B cell (primary cell): ENCODE measurements at regions of chr2 and their contacts with region 1.

Region 1: DNA sequence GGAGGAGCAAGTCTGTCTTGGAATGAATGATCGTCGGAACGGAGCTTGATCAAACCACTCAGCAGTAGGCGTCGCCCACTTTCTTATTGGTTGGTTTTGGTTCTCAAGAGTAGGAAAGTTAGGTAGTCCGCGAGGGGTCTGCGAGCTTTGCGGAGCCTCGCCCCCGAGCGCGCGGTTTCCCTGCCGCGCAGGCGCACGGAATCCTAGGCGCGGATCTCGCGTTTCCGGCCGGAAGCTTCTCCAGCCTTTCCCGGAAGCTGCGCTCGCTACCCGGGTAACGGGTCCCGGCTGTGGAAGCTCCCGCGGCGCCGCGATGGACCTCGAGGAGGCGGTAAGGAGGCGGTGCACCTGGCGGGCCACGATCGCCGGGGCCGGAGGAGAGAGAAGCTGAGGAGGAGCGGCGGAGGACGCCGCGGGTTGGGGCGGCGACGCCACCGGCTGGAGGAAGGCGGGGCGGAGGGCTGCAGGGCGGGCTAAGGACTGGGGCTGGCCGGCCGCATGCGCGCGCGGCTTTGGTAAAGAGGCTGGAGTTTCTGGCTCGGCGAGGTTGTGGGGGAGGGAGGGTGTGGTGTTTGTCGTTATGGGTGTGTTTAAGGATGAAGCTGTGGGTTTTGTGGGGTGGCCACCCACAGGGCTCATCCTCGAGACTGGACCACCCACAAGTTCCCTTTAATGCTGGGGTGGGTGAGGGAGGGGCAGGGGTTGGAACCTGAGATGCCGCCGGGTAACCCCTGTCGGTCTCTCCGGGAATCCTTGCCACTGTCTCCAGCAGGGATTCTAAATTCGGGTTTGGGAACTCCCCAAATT is at the start of gene TAF1B:
- DNase-seq: peak; percentile 90
- ATAC-seq: peak; percentile 86
- H3K4me3 ChIP-seq: peak within 1 kb of the TSS; percentile 73 to 90 (median 84)
- H3K4me3 Mint-ChIP-seq: peak within 1 kb of the TSS; percentile 97
- H3K27ac ChIP-seq: peak within 1 kb of the TSS; percentile 51 to 72
- H3K27ac Mint-ChIP-seq: peak within 1 kb of the TSS; percentile 96
- H3K4me1 ChIP-seq: peaks cover 14 to 20% of the 10 kb centered on the region in 2 donors
- H3K4me1 Mint-ChIP-seq: peaks cover 31% of the 10 kb centered on the region
- H3K27me3 ChIP-seq: no peaks in the 10 kb centered on the region
- H3K27me3 Mint-ChIP-seq: no peaks in the 10 kb centered on the region
- CTCF ChIP-seq: peak; percentile 21
- total RNA-seq, gene TAF1B: 21.8 and 25.5 TPM in 2 replicates

Region 2: GRCh38 chr2:9555297-9556141 is 287.9 kb before region 1 on chr2 and contains the start of gene ADAM17:
- CTCF ChIA-PET with region 1: no interaction called
- POLR2A ChIA-PET with region 1: interaction called, 3 read pairs
- intact Hi-C with region 1: loop called (anchors 5 kb)
- DNase-seq: peak; percentile 94
- ATAC-seq: peak; percentile 91
- H3K4me3 ChIP-seq: peak within 1 kb of the TSS; percentile 74 to 99 (median 98)
- H3K4me3 Mint-ChIP-seq: peak within 1 kb of the TSS; percentile 98
- H3K27ac ChIP-seq: peak within 1 kb of the TSS; percentile 92 to 93
- H3K27ac Mint-ChIP-seq: peak within 1 kb of the TSS; percentile 99
- H3K4me1 ChIP-seq: peaks cover 41 to 44% of the 10 kb centered on the region in 2 donors
- H3K4me1 Mint-ChIP-seq: peaks cover 47% of the 10 kb centered on the region
- H3K27me3 ChIP-seq: no peaks in the 10 kb centered on the region
- H3K27me3 Mint-ChIP-seq: no peaks in the 10 kb centered on the region
- CTCF ChIP-seq: peak; percentile 33
- total RNA-seq, gene ADAM17: 57.8 and 60.5 TPM in 2 replicates

Region 3: DNA sequence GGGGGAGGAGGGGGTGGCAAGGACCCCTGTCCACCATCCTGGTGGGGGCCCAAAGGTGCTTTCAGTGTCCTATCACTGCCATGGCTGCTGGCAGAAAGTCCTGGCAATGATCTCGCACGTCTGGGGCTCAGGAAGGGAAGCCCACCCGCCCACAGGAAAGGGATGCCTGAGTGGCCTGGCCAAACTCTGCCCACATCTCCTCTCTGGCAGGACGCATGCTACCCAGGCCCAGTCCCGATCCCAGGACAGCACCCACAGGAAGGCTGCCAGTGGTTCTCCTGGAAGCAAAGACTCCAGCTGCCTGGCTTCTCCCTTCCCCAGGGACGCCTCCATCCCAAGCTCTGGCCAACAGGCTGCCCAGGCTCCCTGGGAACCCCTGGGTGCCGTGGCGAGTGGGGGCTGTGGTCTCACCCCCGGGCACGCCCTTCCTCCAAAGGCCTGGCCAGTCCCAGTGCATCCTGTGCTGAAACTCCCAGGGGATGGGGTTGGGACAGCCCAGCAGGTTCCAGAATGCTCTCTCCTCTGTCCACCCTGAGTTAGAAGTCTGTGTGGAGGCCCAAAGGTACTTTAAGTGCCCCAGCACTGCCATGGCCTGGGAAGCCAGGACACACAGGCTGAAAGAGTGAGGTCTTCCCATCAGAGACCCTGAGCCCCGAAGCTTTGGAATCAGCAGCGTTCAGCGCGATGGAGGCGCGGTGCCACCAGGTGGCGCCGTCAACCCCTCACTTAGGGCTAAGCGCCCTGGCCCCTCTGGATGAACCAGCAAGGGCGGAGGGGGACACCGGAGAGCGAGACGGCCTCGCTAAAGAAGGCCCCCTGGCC is 29.9 kb before region 1 on chr2:
- CTCF ChIA-PET with region 1: interaction called, 25 read pairs
- POLR2A ChIA-PET with region 1: no interaction called
- intact Hi-C with region 1: loop called (anchors 1 kb)
- DNase-seq: peak; percentile 77
- ATAC-seq: peak; percentile 65
- H3K4me3 ChIP-seq: no peak overlapping the region
- H3K4me3 Mint-ChIP-seq: no peak overlapping the region
- H3K27ac ChIP-seq: no peak overlapping the region
- H3K27ac Mint-ChIP-seq: no peak overlapping the region
- H3K4me1 ChIP-seq: peaks cover 6 to 10% of the 10 kb centered on the region in 2 donors
- H3K4me1 Mint-ChIP-seq: peaks cover 7% of the 10 kb centered on the region
- H3K27me3 ChIP-seq: peaks cover 0 to 10% (median 5%) of the 10 kb centered on the region in 4 experiments
- H3K27me3 Mint-ChIP-seq: peaks cover 13% of the 10 kb centered on the region
- CTCF ChIP-seq: peak; percentile 96

Region 4: GRCh38 chr2:9967053-9967775 is 123.8 kb after region 1 on chr2:
- CTCF ChIA-PET with region 1: no interaction called
- POLR2A ChIA-PET with region 1: no interaction called
- intact Hi-C with region 1: loop called (anchors 5 kb)
- DNase-seq: peak; percentile 74
- ATAC-seq: peak; percentile 96
- H3K4me3 ChIP-seq: no peak overlapping the region
- H3K4me3 Mint-ChIP-seq: no peak overlapping the region
- H3K27ac ChIP-seq: no peak overlapping the region
- H3K27ac Mint-ChIP-seq: peak overlapping the region; percentile 39
- H3K4me1 ChIP-seq: peaks cover 8 to 11% of the 10 kb centered on the region in 2 donors
- H3K4me1 Mint-ChIP-seq: peaks cover 17% of the 10 kb centered on the region
- H3K27me3 ChIP-seq: peaks cover 0 to under 1% (median 0%) of the 10 kb centered on the region in 4 experiments
- H3K27me3 Mint-ChIP-seq: no peaks in the 10 kb centered on the region
- CTCF ChIP-seq: no peak